ENCODE measurements at regions of chr4 and their contacts with region 1.

Region 1: GRCh38 chr4:114208574-114209151 is 229.2 kb upstream of the ARSJ start:
- DNase-seq: no peak
- H3K4me3 ChIP-seq: no peak overlapping the region
- H3K27ac ChIP-seq: no peak overlapping the region
- H3K4me1 ChIP-seq: peaks cover 0 to 10% (median 3%) of the 10 kb centered on the region in 4 donors
- H3K27me3 ChIP-seq: no peaks in the 10 kb centered on the region
- CTCF ChIP-seq: peak; percentile 44 to 50

Region 2: DNA sequence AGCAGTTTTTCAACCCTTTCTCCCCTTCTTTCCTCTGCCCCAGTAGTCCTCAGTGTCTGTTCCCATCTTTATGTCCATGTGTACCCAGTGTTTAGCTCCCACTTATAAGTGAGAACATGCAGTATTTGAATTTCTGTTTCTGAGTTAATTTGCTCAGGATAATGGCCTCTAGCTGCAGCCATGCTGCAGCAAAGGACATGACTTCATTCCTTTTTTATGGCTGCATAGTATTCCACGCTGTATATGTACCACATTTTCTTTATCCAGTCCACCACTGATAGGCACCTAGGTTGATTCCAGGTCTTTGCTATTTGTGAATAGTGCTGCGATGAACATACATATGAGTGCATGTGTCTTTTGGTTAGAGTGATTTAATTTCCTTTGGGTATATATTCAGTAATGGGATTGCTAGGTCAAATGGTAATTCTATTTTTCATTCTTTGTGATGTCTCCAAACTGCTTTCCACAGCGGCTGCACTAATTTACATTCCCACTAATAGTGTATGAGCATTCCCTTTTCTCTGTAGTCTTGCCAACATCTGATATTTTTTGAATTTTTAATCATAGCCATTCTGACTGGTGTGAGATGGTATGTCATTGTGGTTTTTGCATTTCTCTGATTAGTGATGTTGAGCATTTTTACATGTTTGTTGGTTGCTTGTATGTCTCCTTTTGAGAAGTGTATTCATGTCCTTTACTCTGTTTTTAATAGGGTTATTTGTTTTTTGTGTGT is 1213.8 kb before region 1 on chr4:
- intact Hi-C with region 1: no loop called
- DNase-seq: no peak
- H3K4me3 ChIP-seq: no peak overlapping the region
- H3K27ac ChIP-seq: no peak overlapping the region
- H3K4me1 ChIP-seq: no peaks in the 10 kb centered on the region
- H3K27me3 ChIP-seq: no peaks in the 10 kb centered on the region
- CTCF ChIP-seq: no peak

Region 3: DNA sequence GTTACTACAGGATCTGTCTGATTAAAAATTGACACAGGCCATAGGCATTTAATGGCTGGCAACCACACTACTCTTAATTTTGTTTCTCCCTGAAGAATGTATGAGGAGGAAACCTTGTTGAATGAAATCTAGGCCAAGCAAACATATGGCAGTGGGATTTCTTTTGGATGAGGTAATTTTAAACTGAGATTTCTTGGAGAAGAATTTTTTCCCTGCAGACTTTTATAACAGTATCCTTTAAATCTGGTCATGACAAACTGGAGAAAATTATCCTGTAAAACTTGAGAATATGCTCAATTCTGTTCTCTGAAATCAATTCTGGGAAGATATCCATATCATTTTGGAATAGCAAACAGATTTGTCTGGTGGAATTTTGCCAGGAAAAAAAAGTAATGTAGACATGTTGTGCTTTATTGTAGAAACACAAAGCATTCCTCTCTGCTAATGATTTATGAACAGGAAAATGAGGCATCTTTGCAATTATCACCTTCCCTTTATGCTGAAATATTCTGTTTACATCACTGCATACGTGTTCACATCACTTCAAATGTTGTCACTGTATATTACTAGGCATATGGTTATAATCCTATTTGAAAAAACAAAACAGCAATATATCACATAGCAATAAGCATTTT is 121.0 kb before region 1 on chr4:
- intact Hi-C with region 1: no loop called
- DNase-seq: no peak
- H3K4me3 ChIP-seq: no peak overlapping the region
- H3K27ac ChIP-seq: no peak overlapping the region
- H3K4me1 ChIP-seq: no peaks in the 10 kb centered on the region
- H3K27me3 ChIP-seq: no peaks in the 10 kb centered on the region
- CTCF ChIP-seq: no peak

Region 4: DNA sequence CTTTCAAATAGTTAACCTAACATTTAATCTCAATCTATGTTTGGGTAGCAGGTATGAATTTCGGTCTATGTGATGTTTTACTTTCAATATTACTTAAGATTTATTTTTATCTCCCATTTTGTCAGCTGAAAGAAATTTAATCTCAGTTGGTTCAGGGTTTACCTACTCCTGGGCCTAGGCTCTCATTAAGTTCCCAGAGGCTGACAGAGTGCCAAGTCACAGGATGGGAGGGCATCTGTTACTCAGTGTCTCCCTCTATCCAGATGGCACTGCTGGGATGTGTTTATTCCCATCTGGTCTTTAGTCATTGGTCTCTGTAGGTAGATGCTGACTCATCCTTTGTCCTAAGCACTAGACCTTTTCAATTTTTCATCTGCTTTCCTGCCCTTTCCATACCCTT is 99.8 kb before region 1 on chr4:
- intact Hi-C with region 1: no loop called
- DNase-seq: no peak
- H3K4me3 ChIP-seq: no peak overlapping the region
- H3K27ac ChIP-seq: no peak overlapping the region
- H3K4me1 ChIP-seq: no peaks in the 10 kb centered on the region
- H3K27me3 ChIP-seq: no peaks in the 10 kb centered on the region
- CTCF ChIP-seq: no peak

Region 5: DNA sequence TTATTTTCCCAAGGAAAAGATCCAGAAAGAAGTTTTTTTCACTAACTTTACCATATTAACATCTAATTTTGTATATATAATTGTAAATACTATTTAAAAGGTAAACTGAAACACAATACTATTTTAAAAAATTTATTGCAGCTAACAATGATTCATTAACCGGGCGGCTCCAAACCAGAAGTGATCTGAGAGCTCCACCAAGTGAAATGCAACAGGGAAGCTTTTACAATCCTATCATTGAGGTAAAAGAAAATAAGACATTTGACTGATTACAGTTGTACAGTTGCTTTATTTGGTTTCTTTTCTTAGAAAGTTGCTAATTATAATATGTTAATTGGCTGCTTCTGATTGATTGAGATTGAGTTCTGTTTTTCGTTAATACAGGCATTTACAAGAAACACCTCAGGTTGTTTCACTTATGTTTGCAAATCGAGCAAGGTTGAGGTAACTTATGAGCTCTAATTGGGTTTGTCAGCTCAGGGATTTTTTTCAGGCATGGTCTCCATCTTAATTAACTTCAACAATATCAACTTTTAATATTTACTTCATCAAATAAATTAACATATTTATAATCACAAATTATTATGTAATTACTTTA is 169.7 kb after region 1 on chr4:
- intact Hi-C with region 1: loop called (anchors 10 kb)
- DNase-seq: no peak
- H3K4me3 ChIP-seq: no peak overlapping the region
- H3K27ac ChIP-seq: no peak overlapping the region
- H3K4me1 ChIP-seq: no peaks in the 10 kb centered on the region
- H3K27me3 ChIP-seq: no peaks in the 10 kb centered on the region
- CTCF ChIP-seq: peak in 1 of 2 experiments; percentile 60